CD8-positive, alpha-beta T cell (primary cell): ENCODE measurements at regions of chr6 and their contacts with region 1.

Region 1: DNA sequence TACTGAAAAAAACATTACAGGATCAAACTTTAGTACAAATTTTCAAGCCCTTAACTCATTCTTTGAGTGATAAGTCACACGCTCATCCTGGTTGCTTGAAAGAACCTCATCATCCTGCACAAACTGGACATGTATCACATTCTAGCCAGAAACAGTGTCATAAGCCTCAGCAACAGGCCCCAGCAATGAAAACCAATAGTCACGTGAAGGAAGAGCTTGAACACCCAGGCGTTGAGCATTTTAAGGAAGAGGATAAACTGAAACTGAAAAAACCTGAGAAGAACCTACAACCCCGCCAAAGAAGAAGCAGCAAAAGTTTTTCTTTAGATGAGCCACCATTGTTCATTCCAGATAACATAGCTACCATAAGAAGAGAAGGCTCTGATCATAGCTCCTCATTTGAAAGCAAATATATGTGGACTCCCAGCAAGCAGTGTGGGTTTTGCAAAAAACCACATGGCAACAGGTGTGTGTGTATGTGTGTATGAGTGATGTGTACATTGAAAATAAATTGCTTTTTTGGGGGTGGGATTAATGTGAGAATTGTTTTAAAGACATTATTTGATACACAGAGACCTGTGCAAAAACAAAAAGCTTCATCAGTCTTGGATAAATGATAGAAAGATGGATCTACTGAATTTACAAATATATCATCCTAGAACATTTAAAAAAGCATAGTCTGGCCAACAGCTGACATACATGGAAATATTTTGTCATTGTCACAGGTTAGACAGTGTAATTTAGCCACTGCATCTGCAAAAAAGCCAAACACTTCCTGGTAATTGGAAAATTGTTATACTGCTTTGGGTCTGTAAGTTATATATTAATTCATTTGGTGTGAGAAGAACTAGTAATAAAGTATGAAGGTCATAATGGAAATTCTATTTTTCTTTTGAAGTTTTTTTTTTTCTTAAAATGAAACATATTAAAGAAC is 50.1 kb downstream of the PHF3 start:
- DNase-seq: peak in 1 of 9 experiments; percentile 8
- ATAC-seq: no peak
- H3K4me3 ChIP-seq: no peak overlapping the region
- H3K4me3 Mint-ChIP-seq: no peak overlapping the region
- H3K27ac ChIP-seq: no peak overlapping the region
- H3K27ac Mint-ChIP-seq: no peak overlapping the region
- H3K4me1 ChIP-seq: peaks cover 5% of the 10 kb centered on the region
- H3K4me1 Mint-ChIP-seq: peaks cover 48% of the 10 kb centered on the region
- H3K27me3 ChIP-seq: no peaks in the 10 kb centered on the region
- H3K27me3 Mint-ChIP-seq: no peaks in the 10 kb centered on the region
- CTCF ChIP-seq: no peak

Region 2: DNA sequence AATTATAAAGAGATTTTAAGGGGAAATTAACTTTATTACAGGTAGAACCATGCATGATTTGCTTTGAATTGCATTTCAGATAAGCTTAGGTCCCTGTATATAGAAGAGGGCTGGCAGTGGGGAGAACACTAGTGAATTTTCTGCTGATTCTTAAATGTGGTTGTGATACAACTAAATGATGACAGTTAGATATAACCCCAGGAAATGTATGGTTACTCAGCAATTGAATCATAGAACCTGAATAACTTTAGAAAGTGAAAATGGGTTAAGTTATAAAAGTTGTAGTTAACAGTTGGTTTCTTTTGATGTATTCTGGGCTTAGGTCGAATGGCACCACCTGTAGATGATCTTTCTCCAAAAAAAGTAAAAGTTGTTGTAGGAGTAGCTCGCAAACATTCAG is 20.0 kb after region 1 on chr6:
- CTCF ChIA-PET with region 1: no interaction called
- POLR2A ChIA-PET with region 1: no interaction called
- intact Hi-C with region 1: loop called in 1 of 2 experiments (anchors 2 kb)
- DNase-seq: no peak
- ATAC-seq: no peak
- H3K4me3 ChIP-seq: no peak overlapping the region
- H3K4me3 Mint-ChIP-seq: no peak overlapping the region
- H3K27ac ChIP-seq: no peak overlapping the region
- H3K27ac Mint-ChIP-seq: peak overlapping the region; percentile 10
- H3K4me1 ChIP-seq: no peaks in the 10 kb centered on the region
- H3K4me1 Mint-ChIP-seq: peaks cover 4% of the 10 kb centered on the region
- H3K27me3 ChIP-seq: no peaks in the 10 kb centered on the region
- H3K27me3 Mint-ChIP-seq: no peaks in the 10 kb centered on the region
- CTCF ChIP-seq: no peak

Region 3: DNA sequence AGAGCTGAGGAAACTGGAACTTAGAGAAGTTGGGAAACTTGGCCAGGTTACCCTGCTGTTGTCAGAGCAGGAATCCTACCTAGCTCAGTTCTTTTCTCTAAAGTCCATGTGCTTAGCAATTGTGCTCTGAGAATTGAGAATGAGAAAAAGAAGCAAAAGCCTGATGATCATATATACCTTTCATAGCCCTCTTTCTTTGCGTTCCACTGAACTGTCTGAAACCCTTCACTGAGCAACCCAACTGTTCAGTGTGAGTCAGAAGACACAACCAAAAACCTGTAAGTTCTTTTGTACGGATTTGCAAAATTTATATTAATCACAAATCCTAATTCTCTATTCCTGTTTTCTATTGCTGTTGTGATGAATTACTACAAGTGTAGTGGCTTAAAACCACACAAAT is 30.5 kb after region 1 on chr6:
- CTCF ChIA-PET with region 1: no interaction called
- POLR2A ChIA-PET with region 1: no interaction called
- intact Hi-C with region 1: loop called in 1 of 2 experiments (anchors 5 kb)
- DNase-seq: no peak
- ATAC-seq: no peak
- H3K4me3 ChIP-seq: no peak overlapping the region
- H3K4me3 Mint-ChIP-seq: no peak overlapping the region
- H3K27ac ChIP-seq: no peak overlapping the region
- H3K27ac Mint-ChIP-seq: no peak overlapping the region
- H3K4me1 ChIP-seq: no peaks in the 10 kb centered on the region
- H3K4me1 Mint-ChIP-seq: peaks cover 4% of the 10 kb centered on the region
- H3K27me3 ChIP-seq: no peaks in the 10 kb centered on the region
- H3K27me3 Mint-ChIP-seq: no peaks in the 10 kb centered on the region
- CTCF ChIP-seq: no peak

Region 4: DNA sequence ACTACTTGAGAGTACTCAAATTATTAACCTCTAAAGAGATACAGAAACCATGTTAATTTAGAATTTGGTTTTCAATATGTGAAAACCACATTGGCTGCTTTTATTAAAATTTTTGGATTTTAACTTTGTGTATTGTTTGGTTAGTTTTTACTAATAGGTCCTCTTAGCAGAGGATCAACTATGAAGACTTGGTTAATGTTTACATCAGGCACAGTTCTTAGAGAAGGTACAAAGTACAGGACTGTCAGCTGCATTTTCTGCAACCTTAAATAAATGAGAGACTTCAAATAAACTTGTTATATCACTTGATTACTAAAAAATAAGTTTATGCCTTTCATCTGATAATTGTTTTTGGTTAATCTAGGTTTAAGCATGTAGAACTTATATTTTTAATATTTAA is 39.0 kb after region 1 on chr6:
- CTCF ChIA-PET with region 1: no interaction called
- POLR2A ChIA-PET with region 1: no interaction called
- intact Hi-C with region 1: loop called in 1 of 2 experiments (anchors 5 kb)
- DNase-seq: no peak
- ATAC-seq: no peak
- H3K4me3 ChIP-seq: no peak overlapping the region
- H3K4me3 Mint-ChIP-seq: no peak overlapping the region
- H3K27ac ChIP-seq: no peak overlapping the region
- H3K27ac Mint-ChIP-seq: no peak overlapping the region
- H3K4me1 ChIP-seq: no peaks in the 10 kb centered on the region
- H3K4me1 Mint-ChIP-seq: peaks cover 6% of the 10 kb centered on the region
- H3K27me3 ChIP-seq: no peaks in the 10 kb centered on the region
- H3K27me3 Mint-ChIP-seq: no peaks in the 10 kb centered on the region
- CTCF ChIP-seq: no peak